Sigmoid colon (tissue), 7 donors: ENCODE measurements at regions of chr16 and their contacts with region 1.

Region 1: DNA sequence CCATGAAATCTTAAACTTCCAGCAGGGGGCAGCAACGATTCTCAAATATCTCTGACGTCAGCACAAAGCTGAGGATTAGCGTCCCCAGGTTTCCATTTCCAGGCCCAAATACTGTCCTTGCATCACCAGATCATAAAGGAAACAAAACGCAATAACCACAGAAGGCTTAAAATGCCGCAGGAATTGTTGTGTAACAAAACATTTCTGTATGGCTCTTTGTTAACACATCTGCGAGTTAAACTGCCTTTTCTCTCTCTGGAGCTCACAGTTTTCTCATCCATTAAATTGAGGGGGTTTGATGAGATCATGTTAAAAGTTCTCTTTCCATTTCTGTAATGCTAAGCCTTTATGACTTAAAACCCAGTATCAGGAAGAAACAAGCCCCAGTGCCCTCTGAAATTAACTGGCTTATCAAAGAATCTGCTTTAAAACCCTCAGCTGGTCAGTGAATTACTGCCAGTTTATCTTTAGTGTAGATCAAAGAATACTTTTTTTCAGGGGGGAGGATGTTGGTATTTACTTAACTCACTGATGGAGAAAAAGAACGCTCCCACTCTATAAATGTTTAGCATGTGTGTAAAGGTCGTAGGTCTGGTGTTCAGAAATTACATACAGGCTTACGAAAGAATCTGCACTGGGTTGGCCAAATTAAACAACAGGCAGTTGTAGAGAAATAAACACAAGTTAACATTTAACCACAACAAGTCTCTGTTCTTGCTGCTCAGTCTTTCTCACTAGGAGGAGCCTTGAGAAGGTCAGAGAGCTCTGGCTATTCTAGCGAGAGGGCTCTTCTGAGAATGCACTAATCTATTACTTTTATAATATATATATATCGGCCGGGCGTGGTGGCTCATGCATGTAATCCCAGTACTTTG is 10.6 kb upstream of the TERF2 start:
- DNase-seq: peak; percentile 89
- H3K4me3 ChIP-seq: no peak overlapping the region
- H3K27ac ChIP-seq: peak overlapping the region; percentile 77 to 82 (median 80)
- H3K4me1 ChIP-seq: peaks cover 0 to 18% (median 12%) of the 10 kb centered on the region in 4 donors
- H3K27me3 ChIP-seq: no peaks in the 10 kb centered on the region
- CTCF ChIP-seq: peak; percentile 16 to 67 (median 66)
- EP300 ChIP-seq: peak in 1 of 4 donors; percentile 6
- POLR2A ChIP-seq: no peak

Region 2: DNA sequence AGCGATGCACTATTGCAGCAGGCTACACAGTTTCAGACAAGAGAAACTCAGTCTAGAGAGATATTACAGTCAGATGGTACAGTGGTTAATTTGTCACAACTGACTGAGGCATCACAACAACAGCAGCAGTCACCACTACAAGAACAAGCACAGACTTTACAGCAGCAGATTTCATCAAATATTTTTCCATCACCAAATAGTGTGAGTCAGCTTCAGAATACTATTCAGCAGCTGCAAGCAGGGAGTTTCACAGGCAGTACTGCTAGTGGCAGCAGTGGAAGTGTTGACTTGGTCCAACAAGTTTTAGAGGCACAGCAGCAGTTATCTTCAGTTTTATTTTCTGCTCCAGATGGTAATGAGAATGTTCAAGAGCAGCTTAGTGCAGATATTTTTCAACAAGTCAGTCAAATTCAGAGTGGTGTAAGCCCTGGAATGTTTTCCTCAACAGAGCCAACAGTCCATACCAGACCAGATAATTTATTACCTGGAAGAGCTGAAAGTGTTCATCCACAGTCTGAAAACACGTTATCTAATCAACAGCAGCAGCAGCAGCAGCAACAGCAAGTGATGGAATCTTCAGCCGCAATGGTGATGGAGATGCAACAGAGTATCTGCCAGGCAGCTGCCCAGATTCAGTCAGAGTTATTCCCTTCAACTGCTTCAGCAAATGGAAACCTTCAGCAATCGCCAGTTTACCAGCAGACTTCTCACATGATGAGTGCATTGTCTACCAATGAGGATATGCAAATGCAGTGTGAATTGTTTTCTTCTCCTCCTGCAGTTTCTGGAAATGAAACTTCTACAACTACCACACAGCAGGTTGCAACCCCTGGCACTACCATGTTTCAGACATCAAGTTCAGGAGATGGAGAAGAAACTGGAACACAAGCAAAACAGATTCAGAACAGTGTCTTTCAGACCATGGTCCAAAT is 295.8 kb after region 1 on chr16:
- intact Hi-C with region 1: loop called (anchors 10 kb)
- DNase-seq: no peak
- H3K4me3 ChIP-seq: no peak overlapping the region
- H3K27ac ChIP-seq: peak overlapping the region in 2 of 4 donors; percentile 24 to 46
- H3K4me1 ChIP-seq: peaks cover 0 to 14% (median 7%) of the 10 kb centered on the region in 4 donors
- H3K27me3 ChIP-seq: no peaks in the 10 kb centered on the region
- CTCF ChIP-seq: no peak
- EP300 ChIP-seq: no peak
- POLR2A ChIP-seq: no peak

Region 3: DNA sequence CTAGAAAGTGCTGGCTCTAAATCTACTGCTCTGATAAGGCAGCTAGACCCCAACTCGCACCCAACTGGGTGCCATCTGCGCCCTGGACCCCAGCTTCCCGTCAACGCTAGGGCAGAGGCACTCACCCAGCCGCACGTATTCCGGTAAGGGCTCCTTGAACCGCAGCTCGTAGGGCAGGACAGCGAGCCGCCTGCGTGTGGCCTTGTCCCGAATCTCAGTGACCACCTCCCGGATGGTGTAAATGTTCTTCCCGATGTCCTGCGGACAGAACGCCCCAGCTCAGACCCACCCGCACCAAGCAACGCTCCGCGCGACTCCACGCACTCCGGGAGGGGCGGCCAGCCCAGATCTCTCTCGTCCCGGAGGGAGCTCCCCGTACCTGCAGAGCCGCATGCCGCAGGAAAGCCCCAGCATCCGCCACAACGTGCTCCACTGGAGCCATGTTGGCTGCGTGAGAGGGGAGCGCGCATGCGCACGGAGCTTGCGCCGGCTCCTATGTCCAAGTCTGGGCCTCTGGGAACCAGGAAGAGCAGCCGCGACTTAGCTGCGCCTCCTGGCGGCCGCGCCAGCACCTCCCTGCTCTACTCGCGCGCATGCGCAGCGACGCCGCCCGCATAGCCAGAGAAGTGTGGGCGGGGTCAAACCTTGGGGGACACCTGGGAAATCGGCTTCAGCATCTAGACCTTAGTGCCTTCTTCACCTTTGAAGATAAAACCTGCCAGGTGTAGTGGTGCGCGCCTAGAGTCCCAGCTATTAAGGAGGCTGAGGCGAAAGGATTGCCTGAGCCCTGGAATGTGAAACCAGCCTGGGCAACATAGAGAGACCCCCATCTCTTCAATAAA is 358.3 kb after region 1 on chr16 and contains the start of gene NOB1:
- intact Hi-C with region 1: loop called (anchors 2 kb)
- DNase-seq: peak; percentile 98
- H3K4me3 ChIP-seq: peak within 1 kb of the TSS; percentile 70 to 96 (median 76)
- H3K27ac ChIP-seq: peak within 1 kb of the TSS; percentile 63 to 81 (median 76)
- H3K4me1 ChIP-seq: peaks cover 0 to 23% (median 21%) of the 10 kb centered on the region in 4 donors
- H3K27me3 ChIP-seq: no peaks in the 10 kb centered on the region
- CTCF ChIP-seq: peak; percentile 92 to 100 (median 99)
- EP300 ChIP-seq: no peak
- POLR2A ChIP-seq: peak; percentile 11 to 20
- total RNA-seq, gene NOB1: 31.0 to 40.0 (median 35.7) TPM